ENCODE measurements at regions of chr19 and their contacts with region 1.

Region 1: GRCh38 chr19:48646001-48646721 is at the start of gene CA11:
- DNase-seq: peak; percentile 78 to 93 (median 86)
- H3K4me3 ChIP-seq: peak within 1 kb of the TSS; percentile 43 to 86 (median 71)
- H3K27ac ChIP-seq: peak within 1 kb of the TSS; percentile 85 to 99 (median 96)
- H3K27me3 ChIP-seq: no peaks in the 10 kb centered on the region
- CTCF ChIP-seq: peak; percentile 75 to 98 (median 91)
- total RNA-seq, gene CA11: 107 to 396 (median 272) TPM

Region 2: GRCh38 chr19:48578891-48579290 is 67.3 kb before region 1 on chr19:
- intact Hi-C with region 1: no loop called
- DNase-seq: no peak
- H3K4me3 ChIP-seq: no peak overlapping the region
- H3K27ac ChIP-seq: no peak overlapping the region
- H3K27me3 ChIP-seq: no peaks in the 10 kb centered on the region
- CTCF ChIP-seq: no peak

Region 3: DNA sequence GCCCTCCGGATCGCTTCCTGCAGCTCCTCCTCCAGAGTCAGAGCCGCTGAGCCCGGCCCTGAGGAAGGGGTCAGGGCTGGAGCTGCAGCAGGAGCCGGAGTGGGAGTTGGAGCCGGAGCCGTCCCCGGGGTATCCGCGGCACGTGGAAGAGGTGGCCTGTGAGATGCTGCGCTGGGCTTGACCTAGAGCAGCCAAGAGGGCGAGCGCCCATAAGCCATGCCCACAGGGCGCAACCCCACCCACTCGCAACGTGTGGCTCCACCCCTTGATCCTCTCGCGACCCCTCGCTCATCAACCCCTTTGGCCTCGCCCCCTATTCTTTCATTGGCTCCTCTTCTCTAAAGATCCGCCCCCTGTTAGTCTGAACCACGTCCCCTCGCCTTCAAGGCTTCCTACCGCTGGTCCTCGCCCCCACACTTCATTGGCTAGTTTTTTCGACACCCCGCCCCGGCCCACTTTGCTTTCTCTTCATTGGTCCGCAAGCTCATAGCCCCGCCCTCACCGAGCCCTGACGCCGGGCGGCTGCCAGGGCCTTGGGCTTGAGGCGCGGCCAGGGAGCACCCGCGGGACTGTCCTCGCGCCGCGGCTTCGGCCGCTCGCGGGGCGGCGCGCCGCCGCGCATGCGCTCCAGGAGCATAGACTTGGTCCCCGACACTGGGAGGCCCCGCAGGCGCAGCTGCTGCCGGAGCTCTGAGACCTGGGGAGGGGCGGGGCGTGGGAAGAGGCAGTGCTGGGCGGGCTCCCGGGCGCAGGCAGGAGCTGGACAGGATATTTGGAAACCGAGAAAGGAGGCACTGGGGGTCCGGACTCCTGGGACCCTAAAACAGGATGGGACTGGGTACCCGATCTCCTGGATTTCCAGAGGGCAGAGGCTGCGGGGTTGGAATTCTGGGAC is 68.0 kb after region 1 on chr19:
- intact Hi-C with region 1: loop called (anchors 2 to 5 kb)
- DNase-seq: peak; percentile 95 to 100 (median 98)
- H3K4me3 ChIP-seq: peak overlapping the region; percentile 58 to 100 (median 87)
- H3K27ac ChIP-seq: peak overlapping the region; percentile 60 to 95 (median 90)
- H3K27me3 ChIP-seq: no peaks in the 10 kb centered on the region
- CTCF ChIP-seq: peak in 39 of 56 donors; percentile 4 to 60 (median 28)

Region 4: DNA sequence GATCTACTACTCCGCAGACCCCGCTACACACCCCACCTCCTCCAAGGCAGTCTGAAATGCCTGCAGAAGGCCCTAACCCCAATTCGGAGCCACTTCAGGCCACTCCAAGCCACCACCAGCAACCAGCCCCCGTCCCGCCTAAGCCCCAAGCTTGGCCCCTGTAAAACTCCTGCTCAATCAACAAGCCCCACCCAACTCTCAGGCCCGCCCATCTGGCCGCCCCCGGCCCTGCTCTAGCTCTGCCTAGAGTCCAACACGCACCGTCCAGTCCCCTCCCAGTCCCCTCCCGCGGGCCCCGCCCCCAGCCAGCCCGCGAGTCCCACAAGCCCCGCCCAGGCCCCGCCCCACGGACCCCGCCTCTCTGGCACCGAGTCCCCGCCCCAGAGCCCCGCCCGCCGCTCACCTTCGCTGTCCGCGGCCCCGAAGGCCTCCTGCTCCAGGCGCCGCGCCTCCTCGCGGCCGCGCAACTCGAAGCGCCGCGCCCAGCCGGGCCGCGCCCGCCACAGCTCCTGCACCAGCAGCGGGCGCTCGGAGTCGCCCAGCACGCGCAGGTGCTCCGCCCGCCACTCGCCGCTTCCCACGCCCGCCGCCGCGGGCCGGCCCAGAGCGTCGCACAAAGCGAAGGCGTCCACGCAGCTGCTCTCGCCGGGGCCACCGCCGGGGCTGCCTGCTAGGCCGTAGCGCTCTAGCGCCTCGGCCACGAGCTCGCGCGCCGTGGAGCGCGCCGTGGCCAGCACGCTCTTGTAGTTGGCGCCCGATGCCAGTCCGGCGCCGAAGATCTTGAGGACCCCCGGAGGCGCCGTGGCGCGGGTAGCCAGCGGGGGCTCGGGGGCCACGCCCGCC is 92.6 kb after region 1 on chr19:
- intact Hi-C with region 1: loop called (anchors 5 kb)
- DNase-seq: peak; percentile 76 to 97 (median 85)
- H3K4me3 ChIP-seq: peak overlapping the region; percentile 36 to 75 (median 65)
- H3K27ac ChIP-seq: peak overlapping the region in 56 of 59 donors; percentile 50 to 92 (median 78)
- H3K27me3 ChIP-seq: no peaks in the 10 kb centered on the region
- CTCF ChIP-seq: peak in 38 of 56 donors; percentile 7 to 65 (median 35)

Region 5: DNA sequence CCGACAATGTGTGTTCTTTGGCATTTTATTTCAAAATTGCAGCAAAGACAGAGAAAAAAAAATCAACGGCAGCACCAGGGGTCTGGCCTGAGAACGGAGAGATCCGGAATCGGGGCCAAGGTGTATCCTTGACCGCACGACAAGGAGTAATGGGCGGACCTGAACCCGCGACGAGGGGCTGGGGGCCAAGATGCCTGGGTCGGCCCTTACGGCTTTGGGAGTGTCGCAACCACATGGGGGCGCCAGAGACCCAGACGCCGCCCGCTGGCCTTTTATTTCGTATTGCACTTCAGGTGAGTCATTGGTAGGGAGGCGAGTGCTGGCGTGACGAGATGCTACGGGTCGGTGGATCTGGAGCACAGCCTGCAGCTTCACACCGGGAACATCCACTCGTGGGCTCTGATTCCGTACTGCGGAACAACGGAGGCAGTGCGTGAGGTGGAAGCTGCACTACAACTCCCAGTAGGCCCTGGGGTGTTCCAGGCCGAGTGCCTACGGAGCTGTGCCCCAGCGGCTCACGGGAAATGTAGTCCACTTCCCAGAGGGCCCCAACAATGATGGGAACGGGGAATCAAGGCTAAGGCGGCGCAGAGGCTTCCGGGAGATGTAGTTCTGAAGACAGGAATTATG is 149.0 kb after region 1 on chr19:
- intact Hi-C with region 1: loop called in 1 of 2 experiments (anchors 5 kb)
- DNase-seq: peak; percentile 88 to 97 (median 96)
- H3K4me3 ChIP-seq: peak overlapping the region; percentile 15 to 78 (median 65)
- H3K27ac ChIP-seq: peak overlapping the region; percentile 47 to 95 (median 88)
- H3K27me3 ChIP-seq: no peaks in the 10 kb centered on the region
- CTCF ChIP-seq: peak; percentile 88 to 100 (median 98)

Region 6: GRCh38 chr19:48835734-48836088 is 189.6 kb after region 1 on chr19:
- intact Hi-C with region 1: loop called (anchors 5 kb)
- DNase-seq: peak; percentile 87 to 96 (median 92)
- H3K4me3 ChIP-seq: peak overlapping the region; percentile 38 to 74 (median 59)
- H3K27ac ChIP-seq: peak overlapping the region in 57 of 59 donors; percentile 43 to 95 (median 81)
- H3K27me3 ChIP-seq: no peaks in the 10 kb centered on the region
- CTCF ChIP-seq: peak; percentile 76 to 97 (median 90)